CD14-positive monocyte (primary cell): ENCODE measurements at regions of chr11 and their contacts with region 1.

Region 1: DNA sequence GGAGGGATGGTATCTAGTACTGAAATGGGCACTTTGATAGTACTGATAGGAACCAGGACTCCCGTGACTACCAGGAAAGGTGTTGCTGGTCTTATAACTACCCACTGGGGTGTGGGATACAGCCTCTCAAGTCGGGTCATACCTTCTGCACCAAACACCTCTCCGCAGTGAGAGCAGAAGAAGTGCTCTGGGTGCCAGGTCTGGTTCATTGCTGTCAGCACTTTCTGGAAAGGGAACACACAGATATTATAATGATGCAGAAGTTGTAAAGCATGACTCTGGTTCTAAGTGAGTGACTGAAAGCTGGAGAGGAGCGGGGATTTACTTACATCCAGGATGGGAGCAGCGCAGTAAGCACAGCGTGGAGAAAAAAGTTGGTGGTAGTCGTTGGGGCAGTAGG is 26.0 kb downstream of the LPXN start:
- DNase-seq: no peak
- H3K4me3 ChIP-seq: no peak overlapping the region
- H3K4me3 Mint-ChIP-seq: no peak overlapping the region
- H3K27ac ChIP-seq: no peak overlapping the region
- H3K27ac Mint-ChIP-seq: no peak overlapping the region
- H3K4me1 ChIP-seq: no peaks in the 10 kb centered on the region
- H3K4me1 Mint-ChIP-seq: no peaks in the 10 kb centered on the region
- H3K27me3 ChIP-seq: no peaks in the 10 kb centered on the region
- H3K27me3 Mint-ChIP-seq: no peaks in the 10 kb centered on the region
- CTCF ChIP-seq: no peak

Region 2: GRCh38 chr11:58616594-58616993 is 67.0 kb after region 1 on chr11:
- intact Hi-C with region 1: loop called in 1 of 2 experiments (anchors 10 kb)
- DNase-seq: no peak
- H3K4me3 ChIP-seq: no peak overlapping the region
- H3K4me3 Mint-ChIP-seq: no peak overlapping the region
- H3K27ac ChIP-seq: no peak overlapping the region
- H3K27ac Mint-ChIP-seq: no peak overlapping the region
- H3K4me1 ChIP-seq: no peaks in the 10 kb centered on the region
- H3K4me1 Mint-ChIP-seq: no peaks in the 10 kb centered on the region
- H3K27me3 ChIP-seq: no peaks in the 10 kb centered on the region
- H3K27me3 Mint-ChIP-seq: no peaks in the 10 kb centered on the region
- CTCF ChIP-seq: no peak

Region 3: DNA sequence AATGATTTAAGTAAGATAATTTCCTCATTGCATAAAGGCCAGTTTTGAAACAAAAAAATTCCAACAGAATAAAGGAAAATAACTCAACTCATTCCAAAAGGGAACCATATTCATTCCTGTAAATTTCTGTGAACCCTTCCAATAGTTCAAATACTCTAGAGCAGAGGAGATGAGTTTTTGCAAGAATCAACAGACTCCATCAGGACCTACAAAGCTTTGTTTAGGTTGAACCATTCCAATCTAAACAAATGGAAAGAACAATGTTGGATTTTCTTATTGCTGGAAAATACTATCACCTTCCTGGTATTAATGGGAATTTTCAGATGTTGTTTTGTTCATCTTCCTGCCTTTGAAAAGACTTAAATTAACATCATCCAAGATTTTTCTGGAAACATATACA is 787.3 kb after region 1 on chr11:
- intact Hi-C with region 1: no loop called
- DNase-seq: no peak
- H3K4me3 ChIP-seq: no peak overlapping the region
- H3K4me3 Mint-ChIP-seq: no peak overlapping the region
- H3K27ac ChIP-seq: no peak overlapping the region
- H3K27ac Mint-ChIP-seq: no peak overlapping the region
- H3K4me1 ChIP-seq: no peaks in the 10 kb centered on the region
- H3K4me1 Mint-ChIP-seq: no peaks in the 10 kb centered on the region
- H3K27me3 ChIP-seq: no peaks in the 10 kb centered on the region
- H3K27me3 Mint-ChIP-seq: peaks cover 0 to 3% (median 2%) of the 10 kb centered on the region in 3 donors
- CTCF ChIP-seq: no peak